ENCODE measurements at regions of chr1 and their contacts with region 1.

Region 1: GRCh38 chr1:151739590-151740375 is 18.5 kb downstream of the RIIAD1 start:
- DNase-seq: no peak
- H3K4me3 ChIP-seq: no peak overlapping the region
- H3K27ac ChIP-seq: no peak overlapping the region
- H3K27me3 ChIP-seq: no peaks in the 10 kb centered on the region
- CTCF ChIP-seq: no peak

Region 2: GRCh38 chr1:151198255-151199127 is 541.3 kb before region 1 on chr1 and contains the start of gene PIP5K1A:
- intact Hi-C with region 1: loop called in 1 of 2 experiments (anchors 5 kb)
- DNase-seq: peak; percentile 96 to 99 (median 98)
- H3K4me3 ChIP-seq: peak within 1 kb of the TSS; percentile 62 to 98 (median 91)
- H3K27ac ChIP-seq: peak within 1 kb of the TSS; percentile 18 to 95 (median 86)
- H3K27me3 ChIP-seq: no peaks in the 10 kb centered on the region
- CTCF ChIP-seq: peak in 31 of 56 donors; percentile 9 to 60 (median 33)
- total RNA-seq, gene PIP5K1A: 43.8 to 76.6 (median 61.3) TPM

Region 3: DNA sequence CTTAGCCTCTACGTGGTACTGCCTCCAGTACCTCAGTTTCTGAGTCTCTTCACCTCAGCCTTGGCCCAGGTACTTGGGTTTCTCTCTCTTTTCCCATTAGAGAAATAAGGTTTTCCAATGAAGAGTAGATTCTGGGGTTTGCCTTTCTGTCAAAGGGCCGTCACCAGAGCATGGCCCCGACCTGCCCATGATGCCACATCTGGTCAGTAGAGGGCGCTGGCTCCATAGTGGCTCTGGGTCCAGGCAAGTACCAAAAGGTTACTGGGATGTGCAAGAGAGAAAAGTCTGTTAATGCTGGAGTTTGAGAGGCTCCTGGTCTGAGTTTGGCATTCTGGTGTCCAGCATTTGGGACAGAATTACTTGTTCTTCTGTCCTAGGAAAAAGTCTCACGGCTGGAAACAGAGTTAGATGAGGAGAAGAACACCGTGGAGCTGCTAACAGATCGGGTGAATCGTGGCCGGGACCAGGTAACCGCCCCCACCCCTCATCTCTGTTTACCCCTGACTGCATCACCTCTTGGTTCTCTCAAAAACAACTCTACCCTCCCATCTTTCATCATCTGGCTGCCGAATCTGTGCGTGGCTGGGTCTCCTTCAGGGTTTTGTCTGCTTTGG is 205.0 kb before region 1 on chr1:
- intact Hi-C with region 1: loop called (anchors 2 kb)
- DNase-seq: peak; percentile 64 to 82 (median 73)
- H3K4me3 ChIP-seq: no peak overlapping the region
- H3K27ac ChIP-seq: peak overlapping the region in 1 of 59 donors; percentile 15
- H3K27me3 ChIP-seq: no peaks in the 10 kb centered on the region
- CTCF ChIP-seq: peak; percentile 29 to 89 (median 80)

Region 4: GRCh38 chr1:151594143-151594625 is 145.6 kb before region 1 on chr1:
- intact Hi-C with region 1: loop called in 1 of 2 experiments (anchors 5 kb)
- DNase-seq: peak; percentile 57 to 87 (median 74)
- H3K4me3 ChIP-seq: peak overlapping the region in 15 of 59 donors; percentile 3 to 43 (median 12)
- H3K27ac ChIP-seq: no peak overlapping the region
- H3K27me3 ChIP-seq: no peaks in the 10 kb centered on the region
- CTCF ChIP-seq: peak; percentile 70 to 93 (median 85)

Region 5: GRCh38 chr1:151611832-151612500 is 127.8 kb before region 1 on chr1 and contains the start of gene SNX27:
- intact Hi-C with region 1: loop called in 1 of 2 experiments (anchors 5 kb)
- DNase-seq: peak; percentile 87 to 96 (median 94)
- H3K4me3 ChIP-seq: peak within 1 kb of the TSS; percentile 62 to 99 (median 93)
- H3K27ac ChIP-seq: peak within 1 kb of the TSS; percentile 68 to 98 (median 94)
- H3K27me3 ChIP-seq: no peaks in the 10 kb centered on the region
- CTCF ChIP-seq: peak in 22 of 56 donors; percentile 8 to 54 (median 19)
- total RNA-seq, gene SNX27: 71.9 to 121 (median 93.6) TPM

Region 6: DNA sequence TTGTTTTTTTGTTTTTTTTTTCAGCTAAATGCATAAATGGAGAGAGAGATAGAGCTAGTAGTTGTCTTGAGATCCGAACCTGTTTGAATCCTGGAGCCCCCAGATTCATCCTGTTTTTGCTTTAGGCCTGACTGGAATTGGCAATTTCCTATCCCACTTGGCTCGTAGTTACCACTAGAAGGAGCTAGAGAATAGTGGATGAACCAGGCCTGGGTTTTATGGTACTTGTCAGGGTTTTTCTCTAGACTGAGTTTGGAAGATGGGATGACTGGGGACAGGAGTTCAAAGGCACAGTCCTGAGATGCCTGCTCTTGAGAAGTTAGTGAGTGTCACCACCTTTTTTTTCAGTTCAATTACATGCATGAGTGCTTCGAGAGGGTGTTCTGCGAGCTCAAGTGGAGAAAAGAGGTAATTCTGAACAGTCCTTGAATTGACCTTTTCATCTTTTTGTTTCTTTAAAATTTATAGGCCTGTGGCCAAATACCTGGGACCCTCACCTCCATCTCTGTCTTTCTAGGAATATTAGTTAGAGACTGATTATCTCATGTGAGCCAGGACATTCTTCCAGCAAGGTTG is 46.6 kb before region 1 on chr1:
- intact Hi-C with region 1: loop called (anchors 1 to 5 kb)
- DNase-seq: no peak
- H3K4me3 ChIP-seq: no peak overlapping the region
- H3K27ac ChIP-seq: peak overlapping the region in 21 of 59 donors; percentile 3 to 50 (median 19)
- H3K27me3 ChIP-seq: no peaks in the 10 kb centered on the region
- CTCF ChIP-seq: peak; percentile 18 to 75 (median 62)

Measured in dorsolateral prefrontal cortex (tissue), 120 donors.